ENCODE measurements at regions of chr19 and their contacts with region 1.

Region 1: GRCh38 chr19:44002566-44003460 is at the start of gene ZNF230:
- DNase-seq: peak; percentile 90
- ATAC-seq: peak; percentile 99
- H3K4me3 Mint-ChIP-seq: peak within 1 kb of the TSS; percentile 85
- H3K27ac Mint-ChIP-seq: peak within 1 kb of the TSS; percentile 98
- H3K4me1 Mint-ChIP-seq: peaks cover 16% of the 10 kb centered on the region
- H3K27me3 Mint-ChIP-seq: no peaks in the 10 kb centered on the region
- total RNA-seq, gene ZNF230: 3.0 to 3.8 TPM

Region 2: DNA sequence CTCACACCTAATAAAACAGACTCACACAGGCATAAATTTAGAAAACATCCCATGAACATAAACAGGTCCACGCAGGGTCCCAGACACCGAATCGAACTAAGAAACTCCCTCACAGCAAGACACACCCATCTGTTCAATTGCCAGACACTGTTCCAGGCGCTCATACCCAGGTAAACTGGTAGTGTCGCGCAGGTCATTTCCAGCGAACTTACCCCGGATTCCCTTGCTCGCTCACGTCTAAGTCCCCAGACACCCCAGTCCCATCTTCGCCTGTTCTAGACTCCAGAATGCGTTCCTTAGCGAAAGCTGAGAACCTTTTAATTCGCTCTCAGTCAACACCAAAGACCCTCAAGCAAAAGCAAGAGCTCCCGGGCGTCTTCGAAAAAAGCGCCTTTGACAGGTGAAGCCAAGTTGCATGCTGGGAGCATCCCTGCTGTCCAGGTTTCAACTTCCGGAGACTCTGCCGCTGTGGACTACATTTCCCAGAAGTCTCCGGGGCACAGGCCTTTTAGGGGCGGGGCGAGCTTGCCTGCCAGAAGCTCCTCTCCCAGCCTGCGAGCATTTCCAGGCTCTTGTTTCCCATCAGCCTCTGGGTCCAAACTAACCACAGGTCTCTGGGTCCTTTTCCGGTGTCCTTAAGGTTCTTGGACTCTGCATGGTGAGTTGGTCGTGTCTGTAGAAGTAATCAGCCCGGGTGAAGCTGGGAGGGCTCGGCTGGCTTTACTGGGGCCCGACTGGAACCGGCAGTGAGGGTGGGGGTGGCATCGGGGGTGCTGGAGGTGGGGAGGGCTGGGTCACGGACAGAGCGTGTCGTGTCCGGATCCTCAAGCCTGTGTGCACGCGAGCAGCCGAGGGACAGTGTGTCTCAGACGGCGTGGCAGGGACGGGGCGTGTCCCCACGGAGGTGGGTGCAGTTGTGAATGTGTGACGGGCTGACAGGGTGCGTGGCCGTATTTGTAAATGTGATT is 175.7 kb before region 1 on chr19 and contains the start of gene ZNF283:
- CTCF ChIA-PET with region 1: no interaction called
- POLR2A ChIA-PET with region 1: no interaction called
- intact Hi-C with region 1: loop called in 1 of 2 experiments (anchors 1 kb)
- DNase-seq: peak; percentile 92
- ATAC-seq: peak; percentile 99
- H3K4me3 Mint-ChIP-seq: peak within 1 kb of the TSS; percentile 87
- H3K27ac Mint-ChIP-seq: peak within 1 kb of the TSS; percentile 60
- H3K4me1 Mint-ChIP-seq: peaks cover 14% of the 10 kb centered on the region
- H3K27me3 Mint-ChIP-seq: peaks cover 5% of the 10 kb centered on the region
- total RNA-seq, gene ZNF283: 5.4 to 6.8 TPM

Region 3: DNA sequence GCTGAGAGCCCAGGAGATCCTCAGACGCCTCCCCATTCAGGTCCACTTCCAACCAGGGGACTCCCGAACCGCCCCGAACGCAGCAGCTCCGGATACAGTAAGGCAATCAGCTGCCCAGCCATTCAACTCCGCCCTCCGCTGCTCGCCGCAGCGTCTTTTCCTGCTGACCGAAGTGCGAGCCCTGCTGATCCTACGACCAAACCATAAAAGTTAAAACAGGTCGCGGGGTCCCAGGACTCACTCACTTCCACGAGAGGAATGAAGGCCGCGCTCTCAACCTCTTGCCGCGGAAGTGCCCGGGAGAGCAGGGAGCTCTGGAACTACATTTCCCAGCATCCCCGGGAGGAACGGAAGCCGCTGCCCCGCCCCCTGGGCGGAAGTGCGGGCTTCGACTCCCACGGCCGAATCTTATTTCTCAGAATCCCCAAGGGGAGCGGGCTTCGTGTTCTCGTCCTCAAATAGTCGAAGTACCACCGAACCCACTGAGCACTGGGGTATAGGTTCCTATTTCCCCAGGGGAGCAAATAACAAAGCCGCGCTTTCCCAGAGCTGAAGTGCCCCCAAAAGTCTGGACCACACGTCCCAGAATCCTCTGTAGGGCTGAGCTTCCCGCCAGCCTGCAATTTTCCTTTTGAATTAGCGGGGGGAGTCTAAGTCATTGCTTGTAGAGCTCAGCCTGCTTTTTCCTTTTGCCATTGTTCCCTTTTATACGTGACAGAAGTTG is 67.7 kb before region 1 on chr19 and contains the start of gene ZNF45:
- CTCF ChIA-PET with region 1: interaction called, 5 read pairs
- POLR2A ChIA-PET with region 1: no interaction called
- intact Hi-C with region 1: loop called in 1 of 2 experiments (anchors 1 kb)
- DNase-seq: peak; percentile 92
- ATAC-seq: peak; percentile 95
- H3K4me3 Mint-ChIP-seq: peak within 1 kb of the TSS; percentile 93
- H3K27ac Mint-ChIP-seq: peak within 1 kb of the TSS; percentile 91
- H3K4me1 Mint-ChIP-seq: peaks cover 22% of the 10 kb centered on the region
- H3K27me3 Mint-ChIP-seq: no peaks in the 10 kb centered on the region
- total RNA-seq, gene ZNF45: 9.6 to 12.1 TPM

Region 4: DNA sequence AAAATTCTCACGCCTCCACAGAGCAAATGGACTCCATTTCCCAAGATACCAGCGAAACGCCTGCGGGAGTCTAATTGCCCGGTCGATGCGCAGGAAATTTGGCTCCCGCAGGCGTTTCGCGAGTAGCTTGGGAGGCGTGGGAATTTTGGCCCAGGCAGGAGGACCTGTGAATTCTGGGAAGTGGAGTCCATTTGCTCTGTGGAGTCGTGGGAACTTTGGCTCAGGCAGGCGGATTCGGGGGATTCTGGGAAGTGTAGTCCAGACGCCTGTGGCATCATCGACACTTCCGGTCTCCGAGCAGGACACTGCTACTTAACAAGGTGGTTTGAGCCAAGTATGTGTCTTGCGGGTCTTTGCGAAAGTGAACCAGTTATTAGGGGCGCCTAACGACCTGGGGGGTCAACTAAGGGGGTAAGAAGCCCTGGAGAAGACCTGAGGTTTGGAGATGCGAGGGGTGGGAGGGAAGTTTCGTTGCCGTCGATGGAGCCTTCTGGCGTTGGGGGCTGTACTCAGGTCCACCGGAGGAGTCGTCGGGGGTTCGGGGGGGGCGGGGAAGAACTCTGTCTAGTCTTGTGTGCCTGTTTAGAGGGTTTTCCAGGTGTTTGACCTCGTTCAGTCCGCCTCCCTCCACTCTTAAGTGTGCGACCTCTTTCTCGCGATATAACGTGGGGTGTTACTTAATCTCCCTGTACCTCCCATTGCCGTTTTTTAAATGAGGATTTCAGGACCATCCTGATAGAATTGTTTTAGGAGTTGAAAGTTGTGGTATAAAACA is 18.7 kb before region 1 on chr19 and contains the start of gene ZNF155:
- CTCF ChIA-PET with region 1: interaction called, 3 read pairs
- POLR2A ChIA-PET with region 1: no interaction called
- intact Hi-C with region 1: loop called (anchors 1 kb)
- DNase-seq: peak; percentile 82
- ATAC-seq: peak; percentile 97
- H3K4me3 Mint-ChIP-seq: peak within 1 kb of the TSS; percentile 90
- H3K27ac Mint-ChIP-seq: peak within 1 kb of the TSS; percentile 92
- H3K4me1 Mint-ChIP-seq: peaks cover 11% of the 10 kb centered on the region
- H3K27me3 Mint-ChIP-seq: no peaks in the 10 kb centered on the region
- total RNA-seq, gene ZNF155: 4.5 to 6.0 TPM

Region 5: GRCh38 chr19:44113138-44113783 is 110.4 kb after region 1 on chr19 and contains the start of gene ZNF225:
- CTCF ChIA-PET with region 1: no interaction called
- POLR2A ChIA-PET with region 1: no interaction called
- intact Hi-C with region 1: loop called (anchors 1 to 5 kb)
- DNase-seq: peak; percentile 88
- ATAC-seq: peak; percentile 94
- H3K4me3 Mint-ChIP-seq: peak within 1 kb of the TSS; percentile 99
- H3K27ac Mint-ChIP-seq: peak within 1 kb of the TSS; percentile 93
- H3K4me1 Mint-ChIP-seq: peaks cover 19% of the 10 kb centered on the region
- H3K27me3 Mint-ChIP-seq: no peaks in the 10 kb centered on the region
- total RNA-seq, gene ZNF225: 2.6 to 3.1 TPM

Region 6: DNA sequence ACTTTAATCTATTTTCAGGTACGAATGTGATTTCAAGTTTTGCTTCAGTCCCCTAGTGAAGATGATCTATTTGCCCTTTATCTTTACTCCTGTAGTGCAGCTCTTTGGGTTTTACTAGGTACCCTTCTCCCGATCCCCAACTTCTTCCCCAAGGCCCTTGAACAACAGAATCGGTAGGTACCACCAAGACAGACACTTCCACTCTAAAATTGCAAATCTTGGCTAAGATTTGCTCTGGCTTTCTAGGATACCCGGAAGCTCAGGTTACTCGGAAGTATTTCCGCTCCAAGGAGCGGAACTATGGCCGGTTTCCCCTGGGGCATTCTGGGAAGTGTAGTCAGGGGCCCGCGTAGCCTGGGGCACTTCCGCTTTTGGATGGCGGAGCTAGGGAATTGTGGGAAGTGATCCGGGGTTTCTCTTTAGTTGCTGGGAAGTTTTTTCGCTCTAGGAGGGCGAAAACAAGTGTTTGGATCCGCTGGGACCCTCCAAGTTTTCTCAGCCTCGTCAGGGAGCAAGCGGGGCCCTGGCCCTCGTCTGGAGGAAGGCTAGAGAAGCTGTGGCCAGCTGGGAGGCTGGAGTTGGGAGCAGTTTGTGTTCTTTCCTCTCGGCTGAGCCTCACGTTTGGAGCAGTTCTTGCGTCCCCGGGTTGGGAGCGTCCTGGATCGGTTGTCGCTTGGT is 204.5 kb after region 1 on chr19:
- CTCF ChIA-PET with region 1: no interaction called
- POLR2A ChIA-PET with region 1: no interaction called
- intact Hi-C with region 1: loop called (anchors 1 kb)
- DNase-seq: peak; percentile 84
- ATAC-seq: peak; percentile 93
- H3K4me3 Mint-ChIP-seq: peak overlapping the region; percentile 80
- H3K27ac Mint-ChIP-seq: peak overlapping the region; percentile 73
- H3K4me1 Mint-ChIP-seq: peaks cover 4% of the 10 kb centered on the region
- H3K27me3 Mint-ChIP-seq: peaks cover 2% of the 10 kb centered on the region

Region 7: DNA sequence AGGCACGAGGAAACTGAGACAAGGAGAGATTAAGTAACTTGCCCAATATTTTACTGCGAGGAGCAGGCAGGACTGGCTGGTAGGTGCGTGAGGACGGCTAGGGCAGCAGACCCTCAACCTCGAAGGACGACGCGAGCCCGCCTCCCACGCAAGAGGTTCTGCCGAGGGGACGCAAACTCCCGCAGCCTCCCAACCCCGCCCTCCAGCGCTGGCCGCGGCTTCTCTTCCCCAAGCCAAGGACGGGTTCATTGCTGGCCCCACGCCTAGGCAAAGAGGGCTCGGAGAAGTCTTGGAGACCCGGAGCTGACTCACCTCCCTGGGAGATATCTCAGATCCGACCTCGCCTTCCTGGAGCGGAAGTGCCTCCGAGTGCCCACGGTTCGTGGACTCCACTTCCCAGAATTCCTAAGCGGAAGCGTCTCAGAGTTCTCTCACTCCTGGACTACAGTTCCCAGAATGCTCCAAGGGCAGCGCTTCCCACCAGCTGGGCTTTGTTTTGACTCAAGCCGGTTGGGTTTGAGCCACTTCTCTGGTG is 301.9 kb after region 1 on chr19 and contains the start of gene ZNF235:
- CTCF ChIA-PET with region 1: interaction called, 3 read pairs
- POLR2A ChIA-PET with region 1: no interaction called
- intact Hi-C with region 1: loop called in 1 of 2 experiments (anchors 1 kb)
- DNase-seq: peak; percentile 87
- ATAC-seq: peak; percentile 97
- H3K4me3 Mint-ChIP-seq: peak within 1 kb of the TSS; percentile 83
- H3K27ac Mint-ChIP-seq: peak within 1 kb of the TSS; percentile 64
- H3K4me1 Mint-ChIP-seq: peaks cover 12% of the 10 kb centered on the region
- H3K27me3 Mint-ChIP-seq: no peaks in the 10 kb centered on the region
- total RNA-seq, gene ZNF235: 2.1 to 2.7 TPM

Measured in activated CD4-positive, alpha-beta T cell treated with anti-CD3 and anti-CD28 coated beads for 36 hours (primary cell).